Activated CD8-positive, alpha-beta memory T cell treated with anti-CD3 and anti-CD28 coated beads, Interleukin-2, amount 10 ng/mL, durations not matched to agents 7 days and 5 days (primary cell): ENCODE measurements at regions of chr1 and their contacts with region 1.

Region 1: GRCh38 chr1:167553136-167554027 is at the start of gene CREG1:
- DNase-seq: peak; percentile 92
- ATAC-seq: peak; percentile 100
- H3K4me3 Mint-ChIP-seq: peak within 1 kb of the TSS; percentile 77
- H3K27ac Mint-ChIP-seq: peak within 1 kb of the TSS; percentile 62
- H3K4me1 Mint-ChIP-seq: peaks cover 37% of the 10 kb centered on the region
- H3K27me3 Mint-ChIP-seq: peaks cover 4% of the 10 kb centered on the region
- total RNA-seq, gene CREG1: 12.7 to 15.8 TPM

Region 2: DNA sequence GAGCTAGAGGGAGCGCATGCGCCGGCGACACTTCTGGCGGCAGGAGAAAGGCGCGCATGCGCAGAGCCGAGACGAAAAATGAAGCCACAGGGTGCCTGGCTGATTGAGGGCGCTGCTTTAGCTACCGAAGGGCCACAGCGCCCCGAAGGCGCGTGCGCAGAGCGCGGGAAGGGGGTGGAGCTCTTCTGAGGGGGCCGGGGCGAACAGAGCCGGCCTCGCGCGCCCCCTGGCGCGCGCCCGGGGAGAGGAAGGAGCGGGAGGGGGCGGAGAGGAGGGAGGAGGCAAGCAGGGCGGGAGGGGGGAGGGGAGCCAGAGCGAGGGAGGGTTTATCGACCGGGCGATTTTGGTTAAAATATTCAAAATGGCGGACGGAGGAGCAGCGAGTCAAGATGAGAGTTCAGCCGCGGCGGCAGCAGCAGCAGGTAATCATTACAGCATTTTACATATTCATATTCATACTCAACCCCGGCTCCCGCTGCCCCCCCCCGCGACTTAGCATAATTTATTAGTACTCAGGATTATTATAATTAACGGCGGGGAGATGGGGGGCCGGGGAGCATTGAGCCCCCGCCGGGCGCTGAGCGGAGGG is 332.8 kb before region 1 on chr1 and contains the start of gene POU2F1:
- CTCF ChIA-PET with region 1: interaction called, 13 read pairs
- DNase-seq: peak; percentile 99
- ATAC-seq: peak; percentile 86
- H3K4me3 Mint-ChIP-seq: peak within 1 kb of the TSS; percentile 86
- H3K27ac Mint-ChIP-seq: peak within 1 kb of the TSS; percentile 94
- H3K4me1 Mint-ChIP-seq: peaks cover 38% of the 10 kb centered on the region
- H3K27me3 Mint-ChIP-seq: no peaks in the 10 kb centered on the region
- total RNA-seq, gene POU2F1: 20.7 to 24.6 TPM

Region 3: DNA sequence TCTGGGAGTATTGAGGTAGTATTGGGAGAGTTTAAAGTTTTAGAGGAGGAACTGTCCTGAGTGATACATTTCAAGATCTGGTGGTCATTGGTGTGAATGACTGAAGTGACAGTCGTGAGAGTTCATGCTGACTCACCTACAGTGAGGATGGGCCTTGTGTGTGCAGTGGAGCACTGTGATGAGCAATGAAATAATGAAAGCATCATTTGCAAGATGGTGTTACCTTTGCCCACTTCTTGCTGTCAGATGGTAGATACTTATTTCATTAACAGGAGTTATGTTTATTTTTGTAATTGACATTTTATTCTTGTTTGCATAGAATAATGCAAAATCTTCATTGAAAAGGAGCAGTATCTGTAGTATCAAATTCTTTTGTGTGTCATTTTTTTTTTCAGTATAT is 303.7 kb before region 1 on chr1:
- CTCF ChIA-PET with region 1: no interaction called
- DNase-seq: no peak
- ATAC-seq: peak; percentile 73
- H3K4me3 Mint-ChIP-seq: no peak overlapping the region
- H3K27ac Mint-ChIP-seq: no peak overlapping the region
- H3K4me1 Mint-ChIP-seq: peaks cover 26% of the 10 kb centered on the region
- H3K27me3 Mint-ChIP-seq: no peaks in the 10 kb centered on the region